Transverse colon (tissue), 4 donors: ENCODE measurements at regions of chr1 and their contacts with region 1.

Region 1: GRCh38 chr1:169546087-169546995 is 39.9 kb downstream of the F5 start:
- DNase-seq: peak; percentile 47
- H3K4me3 ChIP-seq: no peak overlapping the region
- H3K27ac ChIP-seq: no peak overlapping the region
- H3K4me1 ChIP-seq: peaks cover 0 to 10% (median 0%) of the 10 kb centered on the region in 4 donors
- H3K27me3 ChIP-seq: no peaks in the 10 kb centered on the region
- CTCF ChIP-seq: peak; percentile 72 to 87 (median 79)
- EP300 ChIP-seq: no peak
- POLR2A ChIP-seq: no peak

Region 2: DNA sequence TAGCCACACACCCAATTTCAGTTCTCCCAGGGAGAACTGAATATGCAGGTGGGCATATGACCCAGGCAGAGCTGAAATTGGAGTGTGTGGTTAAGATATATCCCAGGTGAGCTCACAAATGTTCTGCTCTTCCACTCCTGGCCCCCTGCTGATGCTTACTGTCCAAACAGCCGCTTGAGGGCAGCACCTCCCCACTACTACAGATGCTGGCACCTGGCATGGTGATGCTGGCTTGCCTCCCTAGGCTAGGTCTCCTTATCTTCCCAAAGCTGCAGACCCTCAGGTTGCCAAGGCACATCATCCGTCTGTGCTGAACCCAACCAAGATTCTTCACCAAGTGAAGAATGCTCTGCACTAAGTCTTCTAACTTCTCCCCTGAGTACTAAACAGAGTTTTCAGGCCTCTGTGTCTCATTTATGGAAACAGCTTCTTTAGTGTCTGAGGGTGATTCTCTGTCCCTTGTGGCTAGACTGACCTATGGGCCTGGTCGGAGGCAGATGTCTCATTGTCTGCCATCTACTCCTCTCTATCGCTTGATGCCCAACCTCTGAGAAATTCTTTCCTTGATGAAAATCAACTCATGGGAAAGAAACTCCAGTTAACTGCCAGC is 942.7 kb before region 1 on chr1:
- in situ Hi-C with region 1: loop called in 1 of 4 experiments (anchors 25 kb)
- intact Hi-C with region 1: no loop called
- DNase-seq: peak; percentile 82
- H3K4me3 ChIP-seq: no peak overlapping the region
- H3K27ac ChIP-seq: no peak overlapping the region
- H3K4me1 ChIP-seq: peaks cover 0 to 11% (median 1%) of the 10 kb centered on the region in 4 donors
- H3K27me3 ChIP-seq: no peaks in the 10 kb centered on the region
- CTCF ChIP-seq: peak; percentile 77 to 83 (median 81)
- EP300 ChIP-seq: no peak
- POLR2A ChIP-seq: no peak

Region 3: GRCh38 chr1:169044296-169044695 is 502.0 kb before region 1 on chr1:
- in situ Hi-C with region 1: no loop called
- intact Hi-C with region 1: no loop called
- DNase-seq: no peak
- H3K4me3 ChIP-seq: no peak overlapping the region
- H3K27ac ChIP-seq: peak overlapping the region in 3 of 4 donors; percentile 4 to 38 (median 11)
- H3K4me1 ChIP-seq: peaks cover 0 to 45% (median 16%) of the 10 kb centered on the region in 4 donors
- H3K27me3 ChIP-seq: no peaks in the 10 kb centered on the region
- CTCF ChIP-seq: no peak
- EP300 ChIP-seq: no peak
- POLR2A ChIP-seq: no peak

Region 4: GRCh38 chr1:169460191-169460833 is 86.0 kb before region 1 on chr1:
- in situ Hi-C with region 1: loop called in 2 of 4 experiments (anchors 5 to 10 kb)
- intact Hi-C with region 1: loop called (anchors 5 kb)
- DNase-seq: no peak
- H3K4me3 ChIP-seq: peak overlapping the region in 2 of 4 donors; percentile 17 to 19
- H3K27ac ChIP-seq: no peak overlapping the region
- H3K4me1 ChIP-seq: peaks cover 0 to 5% (median 1%) of the 10 kb centered on the region in 4 donors
- H3K27me3 ChIP-seq: peaks cover 10% of the 10 kb centered on the region
- CTCF ChIP-seq: no peak
- EP300 ChIP-seq: no peak
- POLR2A ChIP-seq: no peak

Region 5: DNA sequence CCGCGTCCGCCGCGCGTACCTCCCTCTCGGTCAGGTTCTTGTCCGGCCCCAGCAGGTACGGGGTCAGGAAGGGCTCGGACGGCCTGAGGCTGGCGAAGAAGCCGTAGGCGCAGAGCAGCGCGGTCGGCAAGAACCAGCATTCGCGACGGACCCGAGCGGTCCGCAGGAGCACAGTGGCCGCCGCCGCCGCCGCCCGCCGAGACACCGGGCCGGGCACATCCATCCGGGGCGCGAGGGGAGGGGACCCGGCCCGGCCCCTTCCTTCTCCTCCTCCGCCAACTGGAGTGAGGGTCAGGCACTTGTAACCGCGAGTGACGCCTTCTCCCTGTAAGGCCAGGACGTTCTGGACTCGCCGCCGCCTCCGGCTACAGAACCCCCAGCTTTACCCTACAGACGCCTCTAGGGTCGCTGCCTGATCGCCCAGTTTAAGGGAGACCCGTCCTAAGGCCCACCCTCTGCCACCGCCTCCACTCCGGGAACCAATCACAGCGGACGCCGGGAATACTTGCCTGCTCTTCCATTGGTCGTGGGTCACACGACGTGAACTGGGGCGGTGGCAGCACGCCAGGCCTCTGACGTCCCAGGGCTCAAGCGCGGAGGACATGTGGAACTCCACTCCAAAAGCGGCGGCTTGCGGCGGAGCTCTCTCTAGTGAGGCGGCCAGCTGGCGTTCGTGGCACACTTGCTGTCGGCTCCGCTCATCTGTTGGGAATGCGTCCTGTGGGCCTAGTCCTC is 60.6 kb before region 1 on chr1 and contains the start of gene SLC19A2:
- in situ Hi-C with region 1: loop called in 1 of 4 experiments (anchors 10 kb)
- intact Hi-C with region 1: no loop called
- DNase-seq: peak; percentile 100
- H3K4me3 ChIP-seq: peak within 1 kb of the TSS; percentile 70 to 97 (median 90)
- H3K27ac ChIP-seq: peak within 1 kb of the TSS; percentile 97 to 99 (median 98)
- H3K4me1 ChIP-seq: peaks cover 0 to 37% (median 24%) of the 10 kb centered on the region in 4 donors
- H3K27me3 ChIP-seq: no peaks in the 10 kb centered on the region
- CTCF ChIP-seq: peak in 2 of 5 experiments; percentile 27 to 51
- EP300 ChIP-seq: peak; percentile 99
- POLR2A ChIP-seq: peak; percentile 96
- total RNA-seq, gene SLC19A2: 2.8 to 20.2 (median 14.9) TPM

Region 6: GRCh38 chr1:169586395-169587255 is 40.3 kb after region 1 on chr1 and contains the start of gene F5:
- in situ Hi-C with region 1: no loop called
- intact Hi-C with region 1: no loop called
- DNase-seq: peak; percentile 74
- H3K4me3 ChIP-seq: peak within 1 kb of the TSS in 2 of 4 donors; percentile 7 to 35
- H3K27ac ChIP-seq: no peak within 1 kb of the TSS
- H3K4me1 ChIP-seq: peaks cover 0 to 11% (median 4%) of the 10 kb centered on the region in 4 donors
- H3K27me3 ChIP-seq: peaks cover 10% of the 10 kb centered on the region
- CTCF ChIP-seq: peak; percentile 33 to 66 (median 44)
- EP300 ChIP-seq: no peak
- POLR2A ChIP-seq: no peak
- total RNA-seq, gene F5: 0.32 to 0.82 (median 0.37) TPM in 3 of 4 donors, not detected in the other

Region 7: DNA sequence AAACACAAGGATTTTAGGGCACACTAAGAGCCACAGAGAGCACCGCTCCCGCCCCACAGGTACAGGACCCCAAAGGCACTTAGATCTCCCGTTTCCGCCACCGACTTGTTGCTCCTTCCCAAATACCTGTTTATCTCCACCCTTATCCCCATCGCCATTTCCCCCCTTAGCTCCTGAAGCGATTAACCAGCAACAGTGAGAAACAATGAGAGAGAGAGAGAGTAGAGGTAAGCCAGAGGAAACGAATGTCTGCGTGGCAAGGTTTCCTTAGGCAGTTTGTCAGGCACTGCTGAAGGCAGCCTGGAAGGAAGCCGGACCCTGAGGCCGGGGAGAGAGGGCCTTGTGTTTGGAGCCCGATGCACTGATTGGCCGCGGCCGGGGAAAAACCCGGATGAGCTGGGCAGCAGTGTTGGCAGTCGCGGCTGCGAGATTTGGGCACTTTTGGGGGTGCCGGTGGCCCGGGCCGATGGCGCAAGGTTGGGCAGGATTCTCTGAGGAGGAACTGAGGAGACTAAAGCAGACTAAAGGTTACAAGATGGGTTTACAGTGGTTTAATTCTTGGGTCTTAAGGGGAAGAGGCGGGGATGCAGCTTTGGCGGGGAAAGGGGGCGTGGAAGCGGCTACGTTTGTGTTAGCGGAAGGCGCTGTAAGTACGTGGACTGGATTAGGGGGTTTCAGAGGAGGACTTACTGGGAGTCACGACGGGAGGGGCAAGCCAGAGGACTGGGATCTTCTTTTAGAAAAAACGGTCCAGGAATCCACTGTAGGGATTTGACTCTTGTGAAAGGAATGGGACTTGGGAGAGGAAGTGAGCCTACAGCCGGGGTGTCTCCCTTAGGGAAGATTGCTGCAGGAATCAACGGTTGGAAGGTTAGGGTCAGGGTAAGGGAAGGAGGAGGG is 985.7 kb after region 1 on chr1 and contains the start of gene GORAB:
- in situ Hi-C with region 1: no loop called
- intact Hi-C with region 1: loop called (anchors 5 kb)
- DNase-seq: peak; percentile 92
- H3K4me3 ChIP-seq: peak within 1 kb of the TSS; percentile 51 to 91 (median 67)
- H3K27ac ChIP-seq: peak within 1 kb of the TSS; percentile 93 to 98 (median 94)
- H3K4me1 ChIP-seq: peaks cover 3 to 45% (median 20%) of the 10 kb centered on the region in 4 donors
- H3K27me3 ChIP-seq: no peaks in the 10 kb centered on the region
- CTCF ChIP-seq: no peak
- EP300 ChIP-seq: no peak
- POLR2A ChIP-seq: peak; percentile 87
- total RNA-seq, gene GORAB: 8.2 to 83.0 (median 29.9) TPM